ENCODE measurements at regions of chr13 and their contacts with region 1.

Region 1: GRCh38 chr13:110116072-110116487 is 190.9 kb downstream of the COL4A1 start:
- DNase-seq: peak; percentile 60
- H3K4me3 ChIP-seq: no peak overlapping the region
- H3K27ac ChIP-seq: no peak overlapping the region
- H3K4me1 ChIP-seq: no peaks in the 10 kb centered on the region
- H3K27me3 ChIP-seq: no peaks in the 10 kb centered on the region
- CTCF ChIP-seq: peak; percentile 79

Region 2: GRCh38 chr13:108155185-108156106 is 1960.6 kb before region 1 on chr13:
- intact Hi-C with region 1: no loop called
- DNase-seq: peak; percentile 77
- H3K4me3 ChIP-seq: no peak overlapping the region
- H3K27ac ChIP-seq: peak overlapping the region; percentile 63
- H3K4me1 ChIP-seq: no peaks in the 10 kb centered on the region
- H3K27me3 ChIP-seq: no peaks in the 10 kb centered on the region
- CTCF ChIP-seq: peak; percentile 93

Region 3: DNA sequence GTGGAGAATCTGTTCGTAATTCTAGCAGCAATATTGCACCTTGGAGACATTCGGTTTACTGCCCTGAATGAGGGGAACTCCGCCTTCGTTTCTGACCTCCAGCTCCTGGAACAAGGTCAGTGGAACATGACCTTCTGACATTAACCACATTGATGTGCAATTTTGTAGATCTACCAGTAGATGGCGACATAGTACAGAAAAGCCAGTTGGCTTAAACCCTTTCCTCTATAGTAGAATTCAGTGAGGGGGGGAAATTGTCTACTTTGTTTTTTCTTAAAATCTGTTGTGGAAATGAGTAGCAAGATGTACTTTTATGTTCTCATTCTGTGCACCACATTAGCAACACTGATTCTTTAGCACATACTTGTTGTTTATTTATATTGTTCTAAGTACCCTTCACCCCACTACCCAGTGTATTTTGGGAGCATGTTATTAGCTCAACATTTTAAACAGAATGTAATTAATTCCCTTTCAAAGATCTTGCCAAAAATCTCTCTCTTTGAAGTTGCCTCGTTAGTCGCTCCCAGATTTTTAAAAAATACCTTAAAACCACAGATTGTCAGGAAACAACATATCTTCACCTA is 1154.4 kb before region 1 on chr13:
- intact Hi-C with region 1: loop called (anchors 5 kb)
- DNase-seq: no peak
- H3K4me3 ChIP-seq: no peak overlapping the region
- H3K27ac ChIP-seq: no peak overlapping the region
- H3K4me1 ChIP-seq: no peaks in the 10 kb centered on the region
- H3K27me3 ChIP-seq: no peaks in the 10 kb centered on the region
- CTCF ChIP-seq: peak; percentile 85

Region 4: GRCh38 chr13:109883181-109884180 is 232.6 kb before region 1 on chr13:
- intact Hi-C with region 1: no loop called
- DNase-seq: peak; percentile 54
- H3K4me3 ChIP-seq: no peak overlapping the region
- H3K27ac ChIP-seq: no peak overlapping the region
- H3K4me1 ChIP-seq: no peaks in the 10 kb centered on the region
- H3K27me3 ChIP-seq: no peaks in the 10 kb centered on the region
- CTCF ChIP-seq: no peak

Region 5: DNA sequence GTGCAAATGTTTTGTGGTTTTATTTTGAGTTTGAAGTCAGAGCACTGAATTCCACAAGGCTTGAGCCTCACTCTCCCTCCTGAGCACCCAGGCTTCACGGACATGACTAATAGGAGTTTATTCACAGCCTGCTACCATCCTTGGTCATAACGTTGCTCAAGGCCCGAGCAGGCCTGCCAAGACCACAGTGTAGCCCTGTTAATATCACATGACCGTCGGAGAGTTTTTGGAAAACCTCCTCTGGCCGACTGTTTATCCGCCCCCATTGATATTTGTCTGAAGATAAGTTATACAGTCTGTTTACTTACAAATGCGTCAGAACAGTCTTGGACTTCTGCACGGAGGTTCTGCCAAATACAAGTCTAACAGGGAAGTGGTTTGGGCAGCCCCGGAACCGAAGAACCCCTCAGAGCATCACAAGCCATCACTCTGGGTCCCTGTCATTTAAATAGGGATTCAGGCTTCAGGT is 280.9 kb after region 1 on chr13:
- intact Hi-C with region 1: no loop called
- DNase-seq: peak; percentile 52
- H3K4me3 ChIP-seq: no peak overlapping the region
- H3K27ac ChIP-seq: peak overlapping the region; percentile 55
- H3K4me1 ChIP-seq: no peaks in the 10 kb centered on the region
- H3K27me3 ChIP-seq: no peaks in the 10 kb centered on the region
- CTCF ChIP-seq: no peak

Measured in colonic mucosa (tissue), 4 donors.